WTC11 (cell line): ENCODE measurements at regions of chr5 and their contacts with region 1.

Region 1: GRCh38 chr5:87780831-87781760 is 368.4 kb upstream of the CCNH start:
- DNase-seq: peak; percentile 82
- ATAC-seq: peak; percentile 99
- H3K4me3 Mint-ChIP-seq: peak overlapping the region; percentile 56
- H3K27ac Mint-ChIP-seq: no peak overlapping the region
- H3K4me1 Mint-ChIP-seq: peaks cover 23% of the 10 kb centered on the region
- H3K27me3 Mint-ChIP-seq: peaks cover 41% of the 10 kb centered on the region
- CTCF ChIP-seq: peak; percentile 88

Region 2: GRCh38 chr5:87671146-87671545 is 110.0 kb before region 1 on chr5:
- CTCF ChIA-PET with region 1: no interaction called
- POLR2A ChIA-PET with region 1: no interaction called
- DNase-seq: no peak
- ATAC-seq: no peak
- H3K4me3 Mint-ChIP-seq: no peak overlapping the region
- H3K27ac Mint-ChIP-seq: no peak overlapping the region
- H3K4me1 Mint-ChIP-seq: no peaks in the 10 kb centered on the region
- H3K27me3 Mint-ChIP-seq: no peaks in the 10 kb centered on the region; the same call in 1 of the 2 replicates
- CTCF ChIP-seq: no peak

Region 3: DNA sequence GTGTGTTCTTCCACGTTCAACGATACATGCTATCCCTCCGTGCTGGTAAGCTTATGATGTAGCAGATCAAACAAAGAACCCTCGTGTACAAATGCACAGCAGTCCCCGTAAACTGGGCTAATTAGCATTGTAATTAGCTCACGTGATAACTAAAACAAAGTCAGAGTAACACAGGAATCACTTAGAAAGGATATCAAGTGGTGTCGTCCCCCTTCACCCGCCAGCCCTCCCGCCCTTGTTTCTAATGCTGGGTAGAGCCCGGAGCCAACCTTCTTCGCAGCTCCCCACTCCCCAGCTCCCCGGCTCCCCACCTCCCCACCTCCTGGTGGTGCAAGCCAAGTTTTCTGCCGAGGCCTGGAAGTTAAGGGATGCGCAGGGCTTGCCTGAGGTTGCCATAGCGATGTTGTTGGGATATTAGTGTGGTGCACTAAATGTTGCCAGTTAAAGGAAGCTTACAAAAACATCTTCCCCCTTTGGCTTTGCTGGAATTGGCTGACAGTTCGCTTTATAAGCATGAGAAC is 10.4 kb before region 1 on chr5:
- CTCF ChIA-PET with region 1: interaction called, 20 read pairs
- POLR2A ChIA-PET with region 1: no interaction called
- DNase-seq: peak; percentile 59
- ATAC-seq: peak; percentile 99
- H3K4me3 Mint-ChIP-seq: peak overlapping the region; percentile 54
- H3K27ac Mint-ChIP-seq: no peak overlapping the region
- H3K4me1 Mint-ChIP-seq: peaks cover 22% of the 10 kb centered on the region
- H3K27me3 Mint-ChIP-seq: peaks cover 7% of the 10 kb centered on the region
- CTCF ChIP-seq: no peak

Region 4: DNA sequence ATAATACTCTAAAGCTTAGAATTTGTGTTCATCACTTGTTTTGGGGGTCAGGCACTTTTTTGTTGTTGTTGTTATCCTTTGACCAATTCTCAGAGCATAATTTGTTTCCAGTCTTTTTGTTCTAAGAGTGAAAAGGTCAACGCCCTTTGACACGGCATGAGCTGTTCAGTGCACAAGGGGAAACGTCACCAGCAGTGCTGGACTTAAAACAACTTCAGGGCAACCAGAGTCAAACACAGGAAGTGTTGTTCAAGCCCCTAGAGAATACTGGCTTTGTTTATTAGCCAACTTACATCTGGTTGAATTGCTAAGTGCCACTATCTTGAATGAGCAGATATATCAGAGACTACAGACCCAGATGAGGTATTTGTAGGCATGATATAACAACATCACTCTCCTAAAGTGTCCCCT is 118.6 kb after region 1 on chr5:
- CTCF ChIA-PET with region 1: interaction called, 11 read pairs
- POLR2A ChIA-PET with region 1: no interaction called
- DNase-seq: no peak
- ATAC-seq: peak; percentile 46
- H3K4me3 Mint-ChIP-seq: no peak overlapping the region
- H3K27ac Mint-ChIP-seq: no peak overlapping the region
- H3K4me1 Mint-ChIP-seq: peaks cover 15% of the 10 kb centered on the region
- H3K27me3 Mint-ChIP-seq: no peaks in the 10 kb centered on the region
- CTCF ChIP-seq: no peak

Region 5: GRCh38 chr5:88190139-88190834 is 409.2 kb after region 1 on chr5:
- CTCF ChIA-PET with region 1: interaction called, 12 read pairs
- POLR2A ChIA-PET with region 1: no interaction called
- DNase-seq: peak; percentile 24
- ATAC-seq: no peak
- H3K4me3 Mint-ChIP-seq: no peak overlapping the region
- H3K27ac Mint-ChIP-seq: no peak overlapping the region; the same call in 1 of the 2 replicates
- H3K4me1 Mint-ChIP-seq: 0 out of 2 replicates have a peak, but pooled peaks cover 5% of the 10 kb centered on the region
- H3K27me3 Mint-ChIP-seq: peaks cover 9% of the 10 kb centered on the region; the same call in 1 of the 2 replicates
- CTCF ChIP-seq: no peak

Region 6: GRCh38 chr5:88680253-88681132 is 899.4 kb after region 1 on chr5:
- CTCF ChIA-PET with region 1: interaction called, 17 read pairs
- POLR2A ChIA-PET with region 1: interaction called, 3 read pairs
- DNase-seq: peak; percentile 90
- ATAC-seq: peak; percentile 38
- H3K4me3 Mint-ChIP-seq: peak overlapping the region; percentile 61
- H3K27ac Mint-ChIP-seq: no peak overlapping the region
- H3K4me1 Mint-ChIP-seq: peaks cover 53% of the 10 kb centered on the region
- H3K27me3 Mint-ChIP-seq: peaks cover 98% of the 10 kb centered on the region
- CTCF ChIP-seq: peak; percentile 97

Region 7: GRCh38 chr5:88702328-88702727 is 921.2 kb after region 1 on chr5:
- CTCF ChIA-PET with region 1: interaction called, 11 read pairs
- POLR2A ChIA-PET with region 1: no interaction called
- DNase-seq: no peak
- ATAC-seq: peak; percentile 91
- H3K4me3 Mint-ChIP-seq: no peak overlapping the region
- H3K27ac Mint-ChIP-seq: no peak overlapping the region
- H3K4me1 Mint-ChIP-seq: peaks cover 26% of the 10 kb centered on the region
- H3K27me3 Mint-ChIP-seq: peaks cover 32% of the 10 kb centered on the region
- CTCF ChIP-seq: no peak

Region 8: DNA sequence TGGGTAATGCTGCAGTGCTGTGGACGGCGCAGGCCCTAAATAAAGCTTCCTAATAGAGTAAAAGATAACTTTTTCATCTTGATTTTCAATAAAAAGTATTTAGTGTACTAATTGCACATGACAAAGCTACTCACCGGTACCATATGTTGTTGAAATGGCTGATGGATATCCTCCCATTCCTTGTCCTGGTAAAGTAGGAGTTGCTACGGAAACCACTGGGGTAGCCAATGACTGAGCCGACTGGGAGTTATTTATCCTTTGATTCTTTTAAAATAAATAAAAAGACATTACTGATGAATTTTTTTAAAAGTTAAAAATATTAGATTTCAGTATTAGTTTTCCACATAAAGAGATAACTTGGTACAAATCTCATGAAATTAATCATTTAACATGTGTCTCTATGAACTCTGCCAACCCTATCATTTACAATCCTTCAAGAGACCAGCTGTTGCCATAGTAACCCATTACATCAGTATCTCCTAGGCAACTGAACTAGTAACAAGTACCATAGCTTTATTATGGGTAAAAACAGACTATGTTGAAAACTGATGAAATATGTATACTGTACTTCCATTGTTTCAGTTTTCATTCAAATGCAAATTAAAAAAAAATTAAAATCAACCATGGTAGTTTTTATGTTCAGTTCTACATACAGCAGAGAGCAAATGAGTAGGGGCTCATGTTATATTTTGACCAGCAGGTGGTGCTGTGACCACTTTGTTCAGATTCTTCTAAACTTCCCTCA is 948.2 kb after region 1 on chr5:
- CTCF ChIA-PET with region 1: interaction called, 34 read pairs
- POLR2A ChIA-PET with region 1: no interaction called
- DNase-seq: peak; percentile 65
- ATAC-seq: peak; percentile 77
- H3K4me3 Mint-ChIP-seq: no peak overlapping the region
- H3K27ac Mint-ChIP-seq: no peak overlapping the region
- H3K4me1 Mint-ChIP-seq: peaks cover 24% of the 10 kb centered on the region
- H3K27me3 Mint-ChIP-seq: no peaks in the 10 kb centered on the region
- CTCF ChIP-seq: peak; percentile 65